Ascending aorta (tissue), 2 donors: ENCODE measurements at regions of chr2 and their contacts with region 1.

Region 1: DNA sequence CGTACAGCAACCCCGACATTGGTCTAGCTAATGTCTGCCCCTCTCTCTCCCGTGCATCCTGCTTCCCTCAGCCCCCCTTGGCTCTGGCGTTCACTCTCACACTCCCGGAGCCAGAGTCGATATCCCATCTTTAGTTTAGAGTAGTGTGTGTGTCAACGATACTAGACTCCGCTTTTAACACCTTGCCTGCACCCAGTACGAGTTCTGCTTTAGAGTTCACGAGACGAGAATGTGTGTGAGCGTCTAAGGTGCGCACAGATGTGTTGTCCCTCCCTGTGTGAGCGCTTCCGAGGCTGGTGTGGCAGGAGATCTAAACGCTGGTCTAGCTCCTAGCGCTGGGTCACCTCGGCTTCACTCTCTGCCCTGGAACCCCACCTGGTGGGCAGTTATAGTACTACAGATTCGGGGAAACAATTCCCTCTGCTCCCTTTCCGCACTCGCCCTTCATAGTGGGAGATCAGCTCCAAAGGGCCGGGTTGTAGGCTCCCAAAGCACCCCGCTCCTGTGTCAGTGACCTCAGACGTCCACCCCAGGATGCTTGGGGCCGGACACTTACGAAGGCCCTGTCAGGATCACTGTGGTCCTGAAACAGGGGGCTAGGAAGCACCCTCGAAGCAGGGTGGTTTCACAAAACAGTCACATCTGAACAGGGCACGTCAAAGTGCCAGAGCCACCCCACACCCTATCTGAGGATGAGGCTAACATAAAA is 2.6 kb upstream of the CYP26B1 start:
- DNase-seq: peak in 1 of 2 donors; percentile 86
- H3K4me3 ChIP-seq: peak overlapping the region; percentile 52 to 72
- H3K27ac ChIP-seq: no peak overlapping the region
- H3K4me1 ChIP-seq: peaks cover 11 to 31% of the 10 kb centered on the region in 2 donors
- H3K27me3 ChIP-seq: no peaks in the 10 kb centered on the region
- CTCF ChIP-seq: peak; percentile 88 to 90 (median 88)

Region 2: DNA sequence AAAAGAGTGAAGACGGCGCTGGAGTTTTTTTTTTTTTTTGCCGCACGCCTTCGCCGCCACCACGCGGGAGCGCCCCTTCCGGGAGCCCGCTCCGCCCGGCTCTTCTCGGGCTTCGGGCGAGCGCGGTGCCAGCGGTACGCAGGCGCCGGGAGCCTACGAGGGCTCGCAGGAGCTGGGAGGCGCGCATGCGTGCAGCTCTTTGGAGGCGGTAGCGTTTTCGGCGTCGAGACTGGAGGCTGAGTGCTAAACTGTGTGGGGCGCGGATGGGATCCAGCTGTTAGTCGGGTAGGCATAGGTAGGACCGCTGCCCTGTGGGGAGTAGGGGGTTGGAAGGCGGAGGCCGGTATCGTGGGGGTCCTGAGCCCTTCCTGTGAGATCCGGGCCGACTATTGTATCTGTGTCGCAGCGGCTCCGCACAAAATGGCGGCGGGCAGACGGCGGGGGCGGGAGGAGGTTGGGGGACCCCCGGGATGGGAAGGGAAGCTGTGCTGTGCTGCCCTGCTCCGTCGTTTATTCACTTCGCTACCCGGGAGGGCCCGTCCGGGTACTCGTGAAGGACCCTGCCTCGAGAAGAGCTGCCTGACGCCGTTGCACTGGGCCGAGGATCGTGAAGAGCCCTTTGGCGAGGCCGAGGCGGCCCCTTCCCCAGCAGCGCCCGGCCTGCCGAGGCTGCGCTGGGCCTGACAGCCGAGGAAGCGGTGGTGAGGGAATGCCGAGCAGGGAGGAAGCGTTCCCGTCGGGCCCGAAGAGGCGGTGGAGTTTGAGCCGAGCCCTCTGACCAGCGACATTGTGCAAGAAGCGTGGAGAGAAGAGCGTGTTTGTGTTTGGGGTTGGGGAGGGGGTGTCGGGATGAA is 818.5 kb before region 1 on chr2 and contains the start of gene ZNF638:
- intact Hi-C with region 1: loop called (anchors 10 kb)
- DNase-seq: peak; percentile 66 to 94
- H3K4me3 ChIP-seq: peak within 1 kb of the TSS; percentile 67 to 93
- H3K27ac ChIP-seq: peak within 1 kb of the TSS; percentile 79 to 93
- H3K4me1 ChIP-seq: peaks cover 4 to 20% of the 10 kb centered on the region in 2 donors
- H3K27me3 ChIP-seq: no peaks in the 10 kb centered on the region
- CTCF ChIP-seq: peak; percentile 63 to 81 (median 81)
- total RNA-seq, gene ZNF638: 56.0 TPM

Region 3: DNA sequence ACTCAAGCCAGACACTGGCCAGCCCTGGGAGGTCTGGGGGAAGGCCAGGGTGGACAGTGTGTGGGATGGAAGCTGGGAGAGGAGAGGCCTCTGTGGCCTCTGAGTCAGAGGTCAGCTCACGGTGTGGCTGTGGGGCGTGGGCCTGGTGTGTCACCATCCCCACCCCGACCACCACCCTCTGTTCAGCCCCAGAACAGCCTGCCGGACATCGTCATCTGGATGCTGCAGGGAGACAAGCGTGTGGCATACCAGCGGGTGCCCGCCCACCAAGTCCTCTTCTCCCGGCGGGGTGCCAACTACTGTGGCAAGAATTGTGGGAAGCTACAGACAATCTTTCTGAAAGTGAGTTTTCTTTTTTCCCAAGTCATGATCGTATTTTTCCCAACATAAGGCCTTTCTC is 586.4 kb before region 1 on chr2:
- intact Hi-C with region 1: loop called (anchors 5 kb)
- DNase-seq: no peak
- H3K4me3 ChIP-seq: no peak overlapping the region
- H3K27ac ChIP-seq: peak overlapping the region in 1 of 2 donors; percentile 73
- H3K4me1 ChIP-seq: peaks cover 3 to 30% of the 10 kb centered on the region in 2 donors
- H3K27me3 ChIP-seq: no peaks in the 10 kb centered on the region
- CTCF ChIP-seq: no peak

Region 4: DNA sequence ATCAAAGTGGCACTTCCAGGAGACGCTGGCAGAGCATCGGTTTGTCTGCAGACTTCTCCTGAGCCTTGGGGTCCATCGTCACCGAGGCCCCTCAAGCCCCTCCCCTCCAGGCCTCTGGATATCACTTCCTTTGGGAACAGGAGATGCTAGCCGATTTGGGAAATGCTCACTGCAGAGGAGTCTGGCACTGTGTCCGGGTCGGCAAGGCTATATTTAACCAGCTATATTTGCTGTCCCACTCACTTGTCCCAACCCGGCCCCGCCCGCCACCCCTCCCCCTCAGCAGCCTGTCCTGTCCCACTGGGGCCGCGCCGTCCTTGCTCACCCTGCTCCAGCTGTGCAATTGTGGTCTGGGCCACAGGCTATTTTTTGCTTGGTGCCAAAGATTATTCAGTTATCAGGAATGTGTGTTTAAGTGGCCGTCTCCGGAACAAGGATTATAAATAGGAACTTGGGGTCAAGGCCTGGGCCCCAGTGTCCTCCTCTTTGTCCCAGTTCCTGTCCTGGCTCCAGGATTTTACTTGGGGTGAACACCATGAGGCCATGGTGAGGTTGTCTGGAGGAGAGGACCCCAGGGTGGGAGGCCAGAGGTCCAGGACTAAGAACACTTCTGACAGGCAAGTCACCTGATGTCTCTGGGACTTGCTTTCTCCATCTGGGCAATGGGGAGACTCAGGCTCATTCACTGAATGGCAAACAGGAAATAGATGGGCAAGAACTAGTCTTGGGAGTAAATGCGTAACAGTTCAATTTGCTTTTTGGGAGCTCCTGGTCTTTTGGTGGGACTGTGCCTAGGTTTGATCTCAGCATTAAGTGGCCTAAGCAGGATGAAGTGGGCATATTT is 433.3 kb before region 1 on chr2:
- intact Hi-C with region 1: loop called (anchors 5 kb)
- DNase-seq: peak; percentile 91 to 98
- H3K4me3 ChIP-seq: peak overlapping the region in 1 of 2 donors; percentile 1
- H3K27ac ChIP-seq: peak overlapping the region; percentile 91
- H3K4me1 ChIP-seq: peaks cover 41 to 77% of the 10 kb centered on the region in 2 donors
- H3K27me3 ChIP-seq: no peaks in the 10 kb centered on the region
- CTCF ChIP-seq: no peak

Region 5: DNA sequence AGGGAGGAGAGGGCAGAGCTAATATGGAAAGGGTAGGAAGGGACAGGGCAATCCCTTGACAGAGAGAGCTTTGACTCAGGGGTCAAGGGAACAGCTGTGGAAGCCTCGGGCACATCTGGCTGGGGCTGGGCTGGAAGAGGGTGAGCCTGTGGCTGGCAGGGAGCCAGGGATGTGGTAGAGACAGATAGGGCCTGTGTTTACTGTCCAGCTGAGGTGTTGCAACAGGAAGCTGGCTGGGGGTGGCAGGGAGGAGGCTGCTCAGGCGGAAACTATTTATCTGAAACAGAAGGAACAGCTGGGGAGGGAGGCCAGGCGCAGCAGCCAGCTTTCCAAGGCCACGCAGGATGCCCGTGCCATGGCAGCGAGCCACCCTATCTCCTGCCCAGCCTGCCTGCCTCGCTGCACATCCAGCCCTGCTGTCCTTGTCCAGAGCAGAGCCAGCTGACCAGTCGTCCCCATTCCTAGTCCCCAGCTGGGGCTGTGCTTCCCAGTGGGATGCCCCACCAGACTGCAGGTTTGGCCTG is 267.3 kb before region 1 on chr2:
- intact Hi-C with region 1: loop called (anchors 5 kb)
- DNase-seq: peak in 1 of 2 donors; percentile 84
- H3K4me3 ChIP-seq: no peak overlapping the region
- H3K27ac ChIP-seq: no peak overlapping the region
- H3K4me1 ChIP-seq: peaks cover 21 to 40% of the 10 kb centered on the region in 2 donors
- H3K27me3 ChIP-seq: no peaks in the 10 kb centered on the region
- CTCF ChIP-seq: no peak

Region 6: GRCh38 chr2:71894261-71894660 is 256.1 kb before region 1 on chr2:
- intact Hi-C with region 1: no loop called
- DNase-seq: peak in 1 of 2 donors; percentile 55
- H3K4me3 ChIP-seq: no peak overlapping the region
- H3K27ac ChIP-seq: no peak overlapping the region
- H3K4me1 ChIP-seq: no peaks in the 10 kb centered on the region
- H3K27me3 ChIP-seq: no peaks in the 10 kb centered on the region
- CTCF ChIP-seq: no peak

Region 7: DNA sequence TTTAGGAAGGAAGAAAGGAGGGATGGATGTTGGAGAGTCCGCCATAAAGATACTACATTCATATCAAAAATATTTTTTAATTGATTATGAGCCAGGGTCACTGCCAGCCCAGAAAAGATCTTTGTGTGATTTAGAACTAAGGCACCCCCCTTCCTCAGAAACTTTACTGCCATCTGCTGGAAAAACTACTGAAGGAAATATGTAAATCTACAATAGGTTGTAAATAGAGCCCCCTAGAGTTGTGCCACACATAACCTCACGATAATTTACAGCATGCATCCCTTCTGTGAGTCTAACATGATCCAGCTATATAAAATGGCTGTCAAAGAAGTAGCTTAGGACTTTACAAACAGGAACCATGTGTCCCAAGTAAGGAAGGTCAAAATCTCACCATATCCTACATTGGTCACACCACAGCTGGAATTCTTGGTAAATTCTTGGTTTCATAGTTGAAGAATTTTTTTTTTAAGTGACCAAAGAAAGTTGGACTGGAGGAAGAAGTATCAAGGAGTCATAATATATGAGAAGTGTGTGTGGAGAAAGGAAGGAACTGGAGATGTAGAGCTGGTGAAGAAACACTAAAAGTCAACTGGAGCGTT is 155.1 kb before region 1 on chr2:
- intact Hi-C with region 1: loop called (anchors 5 kb)
- DNase-seq: no peak
- H3K4me3 ChIP-seq: no peak overlapping the region
- H3K27ac ChIP-seq: no peak overlapping the region
- H3K4me1 ChIP-seq: no peaks in the 10 kb centered on the region
- H3K27me3 ChIP-seq: no peaks in the 10 kb centered on the region
- CTCF ChIP-seq: peak in 2 of 3 experiments; percentile 31 to 57

Region 8: GRCh38 chr2:72081451-72081850 is 68.9 kb before region 1 on chr2:
- intact Hi-C with region 1: no loop called
- DNase-seq: no peak
- H3K4me3 ChIP-seq: no peak overlapping the region
- H3K27ac ChIP-seq: no peak overlapping the region
- H3K4me1 ChIP-seq: no peaks in the 10 kb centered on the region
- H3K27me3 ChIP-seq: no peaks in the 10 kb centered on the region
- CTCF ChIP-seq: no peak

Region 9: DNA sequence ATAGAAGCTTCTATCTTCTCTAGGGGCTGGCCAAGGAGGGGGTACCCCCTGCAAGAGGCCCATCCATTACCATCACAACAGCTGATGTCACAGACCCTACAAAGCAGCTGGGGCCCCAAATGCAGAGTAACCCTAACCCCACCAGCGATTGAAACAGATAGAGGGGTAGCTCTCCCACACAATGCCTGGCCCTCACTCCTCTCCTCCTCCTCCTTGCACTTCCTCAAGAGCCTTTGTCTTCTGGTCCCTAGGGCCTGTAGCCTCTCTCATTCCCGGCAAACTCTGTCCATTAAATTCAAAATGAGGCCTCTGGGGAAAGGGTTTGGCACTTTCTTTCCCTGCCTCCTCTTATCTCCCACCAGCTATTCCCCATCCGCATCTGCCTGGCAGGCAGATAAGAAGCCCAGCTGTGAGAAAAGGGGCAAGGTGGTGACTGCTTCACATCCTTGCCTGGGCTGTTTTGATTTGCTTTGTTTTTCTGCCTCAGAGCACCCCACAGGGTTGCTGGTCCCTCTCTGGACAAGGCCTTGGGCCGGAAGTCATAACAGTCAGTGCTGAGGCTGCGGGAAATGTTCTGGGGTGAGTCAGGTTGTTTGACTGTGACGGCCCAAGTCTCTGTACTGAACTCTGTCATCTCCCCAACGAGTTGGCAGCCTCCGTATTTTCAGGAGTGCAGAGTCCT is 23.5 kb after region 1 on chr2:
- intact Hi-C with region 1: no loop called
- DNase-seq: no peak
- H3K4me3 ChIP-seq: no peak overlapping the region
- H3K27ac ChIP-seq: no peak overlapping the region
- H3K4me1 ChIP-seq: no peaks in the 10 kb centered on the region
- H3K27me3 ChIP-seq: no peaks in the 10 kb centered on the region
- CTCF ChIP-seq: no peak